Sciatic nerve (tissue), 2 donors: ENCODE measurements at regions of chr1 and their contacts with region 1.

Region 1: GRCh38 chr1:94079080-94079940 is 41.6 kb downstream of the ABCA4 start:
- DNase-seq: no peak
- ATAC-seq: no peak

Region 2: GRCh38 chr1:94004924-94005323 is 74.4 kb before region 1 on chr1:
- intact Hi-C with region 1: no loop called
- DNase-seq: no peak
- ATAC-seq: no peak

Region 3: DNA sequence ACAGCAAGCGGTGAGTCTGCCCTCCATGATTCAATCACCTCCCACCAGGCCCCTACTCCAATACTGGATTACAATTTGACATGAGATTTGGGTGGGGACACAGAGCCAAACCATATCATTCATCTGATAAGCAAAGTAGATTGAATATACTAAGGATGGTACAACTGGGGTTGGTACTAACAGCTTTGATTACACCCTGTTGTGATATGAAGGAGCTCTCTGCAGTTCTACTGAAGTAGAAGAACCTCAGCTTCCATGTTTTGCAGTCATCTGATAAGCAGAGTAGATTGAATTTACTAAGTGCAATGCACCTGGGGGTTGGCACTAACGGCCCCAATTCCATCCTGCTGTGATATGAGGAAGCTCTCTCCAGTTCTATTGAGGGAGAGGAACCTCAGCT is 1185.8 kb after region 1 on chr1:
- intact Hi-C with region 1: loop called (anchors 5 kb)
- DNase-seq: no peak
- ATAC-seq: no peak